AG04449 (cell line): ENCODE measurements at regions of chr15 and their contacts with region 1.

Region 1: GRCh38 chr15:71048913-71049675 is 66.2 kb upstream of the THSD4 start:
- DNase-seq: peak; percentile 97
- H3K4me3 ChIP-seq: no peak overlapping the region
- CTCF ChIP-seq: no peak

Region 2: DNA sequence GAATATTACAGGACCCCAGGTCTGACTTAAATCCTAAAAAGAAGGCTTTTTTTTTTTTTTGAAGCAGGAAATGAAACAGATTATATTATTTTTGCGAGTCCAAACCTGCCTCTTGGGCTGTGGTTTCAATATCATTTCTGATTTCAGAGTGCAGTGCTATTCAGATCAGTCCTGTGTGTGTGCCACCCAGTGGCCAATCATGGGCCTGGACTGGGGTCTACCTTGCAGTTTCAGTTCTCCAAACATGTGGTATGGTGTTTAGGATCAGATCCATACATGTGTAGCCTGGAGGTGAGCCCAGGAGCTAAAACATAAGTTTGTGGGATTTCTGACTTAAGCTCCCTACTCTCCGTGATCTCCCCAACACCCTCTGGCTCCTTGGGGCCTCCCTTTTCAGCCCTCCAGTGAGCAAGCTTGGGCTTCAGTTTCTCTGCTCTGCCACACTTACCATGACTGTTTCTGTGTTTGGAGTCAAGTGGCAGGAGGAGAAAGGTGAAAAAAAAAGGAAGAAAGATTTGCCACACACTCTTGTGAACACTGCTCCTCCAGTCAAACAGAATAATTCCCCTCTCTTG is 54.1 kb after region 1 on chr15:
- CTCF ChIA-PET with region 1: interaction called, 10 read pairs
- POLR2A ChIA-PET with region 1: no interaction called
- DNase-seq: no peak
- H3K4me3 ChIP-seq: no peak overlapping the region
- CTCF ChIP-seq: peak; percentile 64